Activated naive CD4-positive, alpha-beta T cell treated with anti-CD3 and anti-CD28 coated beads for 36 hours (primary cell): ENCODE measurements at regions of chr18 and their contacts with region 1.

Region 1: GRCh38 chr18:69968039-69968438 is 20.4 kb upstream of the CD226 start:
- DNase-seq: peak; percentile 72
- H3K4me3 Mint-ChIP-seq: peak overlapping the region; percentile 35
- H3K27ac Mint-ChIP-seq: no peak overlapping the region
- H3K4me1 Mint-ChIP-seq: peaks cover 9% of the 10 kb centered on the region
- H3K27me3 Mint-ChIP-seq: no peaks in the 10 kb centered on the region

Region 2: GRCh38 chr18:69469444-69469919 is 498.6 kb before region 1 on chr18:
- CTCF ChIA-PET with region 1: no interaction called
- intact Hi-C with region 1: loop called (anchors 10 kb)
- DNase-seq: peak; percentile 51
- H3K4me3 Mint-ChIP-seq: no peak overlapping the region
- H3K27ac Mint-ChIP-seq: no peak overlapping the region
- H3K4me1 Mint-ChIP-seq: no peaks in the 10 kb centered on the region
- H3K27me3 Mint-ChIP-seq: peaks cover 2% of the 10 kb centered on the region

Region 3: DNA sequence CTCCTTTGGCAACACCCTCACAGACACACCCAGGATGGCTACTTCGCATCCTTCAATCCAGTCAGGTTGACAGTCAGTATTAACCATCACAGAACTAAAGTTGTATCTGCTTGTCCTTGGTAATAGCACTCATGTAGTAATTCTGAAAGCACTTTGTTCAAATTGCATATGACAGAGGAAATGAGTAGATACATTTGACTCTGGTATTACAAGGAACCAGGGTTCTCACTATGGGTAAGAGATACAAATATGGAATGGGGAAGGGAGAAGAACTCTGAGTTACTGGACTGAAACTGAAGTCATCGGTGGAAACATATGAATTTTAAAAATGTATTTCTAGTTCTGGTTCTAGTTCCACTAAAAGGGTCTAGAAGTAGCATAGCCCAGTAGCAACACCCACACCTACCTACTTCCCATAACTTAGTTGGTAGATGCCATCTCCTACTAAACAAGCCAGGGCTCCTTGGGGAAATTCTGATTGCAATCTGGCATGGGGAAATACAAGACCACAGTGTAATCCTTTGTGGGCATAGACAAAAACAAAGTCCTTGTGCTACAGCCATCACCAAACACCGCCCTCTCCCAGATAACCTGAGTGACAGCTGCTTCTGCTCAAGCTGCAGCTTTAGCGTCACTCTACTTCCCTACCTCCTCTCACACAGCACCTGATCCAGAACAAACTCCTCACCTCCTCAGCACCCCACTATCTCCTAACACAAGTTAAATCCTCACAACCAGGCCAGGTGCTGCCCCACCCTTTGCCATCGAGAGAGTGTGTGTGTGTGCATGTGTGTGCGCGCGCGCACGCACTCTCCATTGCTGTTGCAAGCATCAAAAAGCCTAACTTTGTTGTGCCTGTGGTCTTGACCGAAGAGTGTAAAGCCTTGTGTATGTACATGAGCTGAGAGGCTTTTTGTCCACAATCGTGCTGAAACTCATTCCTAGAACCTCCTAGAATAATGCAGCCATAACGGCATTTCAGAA is 11.0 kb after region 1 on chr18:
- CTCF ChIA-PET with region 1: interaction called, 4 read pairs
- intact Hi-C with region 1: loop called (anchors 1 kb)
- DNase-seq: peak; percentile 27
- H3K4me3 Mint-ChIP-seq: no peak overlapping the region
- H3K27ac Mint-ChIP-seq: peak overlapping the region; percentile 37
- H3K4me1 Mint-ChIP-seq: peaks cover 44% of the 10 kb centered on the region
- H3K27me3 Mint-ChIP-seq: no peaks in the 10 kb centered on the region